Dorsolateral prefrontal cortex (tissue), 120 donors: ENCODE measurements at regions of chr2 and their contacts with region 1.

Region 1: DNA sequence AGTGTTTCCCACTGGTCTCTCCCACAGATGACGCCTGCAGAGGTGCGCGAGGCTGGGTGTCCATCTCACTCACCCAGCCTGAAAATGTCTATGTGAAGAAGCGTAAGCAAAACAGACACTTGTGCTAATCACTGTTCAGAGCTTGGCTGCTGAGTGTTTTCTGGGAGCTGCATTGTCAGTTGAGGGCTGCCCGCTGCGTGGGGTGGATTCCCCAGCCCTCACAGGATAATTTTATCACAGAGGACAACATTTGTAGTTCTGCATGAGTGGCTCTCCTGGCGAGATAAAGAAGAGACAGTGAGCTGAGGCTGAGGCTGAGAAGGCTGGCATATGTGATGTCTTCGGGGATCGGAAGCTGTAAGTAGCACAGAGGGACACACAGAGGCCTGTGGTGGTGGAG is 16.2 kb upstream of the CAPN13 start:
- DNase-seq: peak in 5 of 10 donors; percentile 42 to 72 (median 67)
- H3K4me3 ChIP-seq: peak overlapping the region in 6 of 59 donors; percentile 1 to 42 (median 6)
- H3K27ac ChIP-seq: peak overlapping the region in 58 of 59 donors; percentile 3 to 99 (median 96)
- H3K27me3 ChIP-seq: no peaks in the 10 kb centered on the region
- CTCF ChIP-seq: peak in 2 of 56 donors; percentile 6 to 9

Region 2: GRCh38 chr2:30862054-30862651 is 38.7 kb after region 1 on chr2:
- intact Hi-C with region 1: loop called in 1 of 2 experiments (anchors 5 kb)
- DNase-seq: peak in 7 of 10 donors; percentile 25 to 72 (median 55)
- H3K4me3 ChIP-seq: no peak overlapping the region
- H3K27ac ChIP-seq: peak overlapping the region in 26 of 59 donors; percentile 2 to 72 (median 30)
- H3K27me3 ChIP-seq: no peaks in the 10 kb centered on the region
- CTCF ChIP-seq: peak; percentile 55 to 94 (median 82)

Region 3: DNA sequence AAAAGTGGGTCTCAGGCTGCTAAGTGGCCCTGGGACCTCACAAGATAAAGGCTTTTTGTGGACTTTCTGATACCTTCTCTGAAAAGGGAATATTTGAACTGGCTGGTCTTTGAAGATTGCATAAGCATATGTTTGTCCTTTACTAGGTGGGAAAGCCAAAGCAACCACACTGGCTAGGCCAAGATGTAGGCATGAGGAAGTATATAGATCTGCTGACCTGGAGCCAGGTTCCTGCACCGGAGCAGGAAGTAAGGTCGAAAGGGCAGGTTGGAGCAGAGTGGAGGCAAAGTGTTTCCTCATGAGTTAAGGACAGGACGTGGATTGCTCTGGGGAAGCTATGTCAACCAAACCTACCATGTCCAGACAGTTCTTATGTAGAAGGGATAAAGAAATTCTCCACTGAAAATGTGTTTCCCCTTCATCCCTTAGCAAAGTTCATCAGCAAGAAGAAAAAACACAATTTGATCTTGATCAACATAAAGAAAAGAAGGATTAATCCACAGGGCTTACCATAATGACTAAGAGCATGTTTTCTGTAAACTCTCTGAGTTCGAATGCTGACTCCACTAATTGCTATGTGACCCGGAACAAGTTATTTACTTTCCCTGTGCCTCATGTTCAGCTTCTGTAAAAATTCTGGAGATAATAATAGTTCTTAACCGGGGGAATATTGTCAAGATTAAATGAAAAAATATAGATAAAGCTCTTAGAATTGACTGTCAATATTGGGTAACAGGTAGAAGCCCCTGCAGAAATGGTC is 913.4 kb after region 1 on chr2:
- intact Hi-C with region 1: no loop called
- DNase-seq: no peak
- H3K4me3 ChIP-seq: no peak overlapping the region
- H3K27ac ChIP-seq: no peak overlapping the region
- H3K27me3 ChIP-seq: no peaks in the 10 kb centered on the region
- CTCF ChIP-seq: no peak